ENCODE measurements at regions of chr12 and their contacts with region 1.

Region 1: DNA sequence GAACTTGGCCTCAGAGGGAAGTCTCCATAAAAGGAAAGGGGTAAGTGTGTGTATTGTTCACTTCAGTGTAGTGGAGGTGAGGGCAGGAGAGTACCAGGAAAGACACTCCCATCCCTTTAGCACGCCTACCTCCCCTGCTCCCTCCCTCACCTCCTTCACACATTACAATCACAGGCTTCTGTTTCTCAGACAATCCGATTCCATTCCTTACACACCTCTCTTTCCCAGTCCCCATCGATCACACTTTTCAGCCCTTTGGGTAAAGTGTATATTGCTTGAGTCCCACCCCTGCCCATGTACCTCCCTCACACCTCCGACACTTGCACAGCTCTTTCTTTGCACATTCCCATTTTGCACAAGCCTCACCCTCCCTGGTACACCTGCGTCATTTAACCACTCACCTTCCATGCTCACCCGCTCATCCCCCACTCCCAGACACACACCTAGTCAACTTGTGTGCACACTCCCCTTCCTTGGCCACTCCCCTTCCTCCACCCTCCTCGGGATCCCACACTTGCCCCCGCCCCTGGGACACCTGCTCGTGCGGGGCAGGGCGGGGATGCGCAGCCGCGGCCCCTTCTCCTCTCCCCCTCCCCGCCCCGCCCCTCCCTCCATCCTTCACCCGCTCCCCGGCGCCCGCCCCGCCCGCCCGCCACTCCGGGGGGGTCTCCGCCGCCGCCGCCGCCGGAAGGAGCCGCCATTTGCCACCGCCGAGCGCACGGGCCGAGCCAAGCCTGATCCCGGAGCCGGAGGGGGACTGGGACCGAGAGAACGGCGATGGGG is at the start of gene MARCHF9:
- DNase-seq: peak; percentile 65 to 90 (median 78)
- ATAC-seq: peak; percentile 46 to 57 (median 50)
- H3K4me3 ChIP-seq: peak within 1 kb of the TSS; percentile 55 to 70
- H3K4me3 Mint-ChIP-seq: peak within 1 kb of the TSS; percentile 81 to 91 (median 90)
- H3K27ac ChIP-seq: peak within 1 kb of the TSS; percentile 80
- H3K27ac Mint-ChIP-seq: peak within 1 kb of the TSS; percentile 93 to 99
- H3K4me1 ChIP-seq: peaks cover 34 to 65% of the 10 kb centered on the region in 2 experiments
- H3K4me1 Mint-ChIP-seq: peaks cover 65 to 71% (median 69%) of the 10 kb centered on the region in 3 donors
- H3K27me3 ChIP-seq: no peaks in the 10 kb centered on the region
- H3K27me3 Mint-ChIP-seq: no peaks in the 10 kb centered on the region
- total RNA-seq, gene MARCHF9: 45.4 to 72.9 (median 71.7) TPM

Region 2: GRCh38 chr12:57611108-57611809 is 143.3 kb before region 1 on chr12 and contains the start of gene ARHGEF25:
- CTCF ChIA-PET with region 1: no interaction called
- POLR2A ChIA-PET with region 1: no interaction called
- DNase-seq: peak in 8 of 35 experiments; percentile 20 to 54 (median 40)
- ATAC-seq: peak; percentile 69 to 79 (median 71)
- H3K4me3 ChIP-seq: peak within 1 kb of the TSS; percentile 53 to 62
- H3K4me3 Mint-ChIP-seq: peak within 1 kb of the TSS; percentile 74 to 78 (median 75)
- H3K27ac ChIP-seq: no peak within 1 kb of the TSS
- H3K27ac Mint-ChIP-seq: peak within 1 kb of the TSS in 1 of 2 donors; percentile 74
- H3K4me1 ChIP-seq: peaks cover 2 to 19% of the 10 kb centered on the region in 2 experiments
- H3K4me1 Mint-ChIP-seq: peaks cover 10 to 15% (median 13%) of the 10 kb centered on the region in 3 donors
- H3K27me3 ChIP-seq: peaks cover 2 to 59% of the 10 kb centered on the region in 2 experiments
- H3K27me3 Mint-ChIP-seq: peaks cover 13 to 29% of the 10 kb centered on the region in 2 donors
- total RNA-seq, gene ARHGEF25: 0.67 to 1.4 (median 0.84) TPM

Region 3: GRCh38 chr12:57771708-57772428 is 17.3 kb after region 1 on chr12 and contains the start of gene METTL1:
- CTCF ChIA-PET with region 1: interaction called, 3 to 11 read pairs
- POLR2A ChIA-PET with region 1: interaction called in 1 of 2 experiments, 4 read pairs
- DNase-seq: peak; percentile 74 to 93 (median 85)
- ATAC-seq: peak; percentile 90 to 92 (median 90)
- H3K4me3 ChIP-seq: peak within 1 kb of the TSS; percentile 74 to 91
- H3K4me3 Mint-ChIP-seq: peak within 1 kb of the TSS; percentile 94 to 96 (median 95)
- H3K27ac ChIP-seq: peak within 1 kb of the TSS; percentile 61
- H3K27ac Mint-ChIP-seq: peak within 1 kb of the TSS; percentile 93 to 94
- H3K4me1 ChIP-seq: peaks cover 9 to 26% of the 10 kb centered on the region in 2 experiments
- H3K4me1 Mint-ChIP-seq: peaks cover 12 to 24% (median 21%) of the 10 kb centered on the region in 3 donors
- H3K27me3 ChIP-seq: peaks cover 5% of the 10 kb centered on the region in 2 experiments
- H3K27me3 Mint-ChIP-seq: peaks cover 0 to 5% of the 10 kb centered on the region in 2 donors
- total RNA-seq, gene METTL1: 10.3 to 17.4 (median 14.5) TPM

Region 4: DNA sequence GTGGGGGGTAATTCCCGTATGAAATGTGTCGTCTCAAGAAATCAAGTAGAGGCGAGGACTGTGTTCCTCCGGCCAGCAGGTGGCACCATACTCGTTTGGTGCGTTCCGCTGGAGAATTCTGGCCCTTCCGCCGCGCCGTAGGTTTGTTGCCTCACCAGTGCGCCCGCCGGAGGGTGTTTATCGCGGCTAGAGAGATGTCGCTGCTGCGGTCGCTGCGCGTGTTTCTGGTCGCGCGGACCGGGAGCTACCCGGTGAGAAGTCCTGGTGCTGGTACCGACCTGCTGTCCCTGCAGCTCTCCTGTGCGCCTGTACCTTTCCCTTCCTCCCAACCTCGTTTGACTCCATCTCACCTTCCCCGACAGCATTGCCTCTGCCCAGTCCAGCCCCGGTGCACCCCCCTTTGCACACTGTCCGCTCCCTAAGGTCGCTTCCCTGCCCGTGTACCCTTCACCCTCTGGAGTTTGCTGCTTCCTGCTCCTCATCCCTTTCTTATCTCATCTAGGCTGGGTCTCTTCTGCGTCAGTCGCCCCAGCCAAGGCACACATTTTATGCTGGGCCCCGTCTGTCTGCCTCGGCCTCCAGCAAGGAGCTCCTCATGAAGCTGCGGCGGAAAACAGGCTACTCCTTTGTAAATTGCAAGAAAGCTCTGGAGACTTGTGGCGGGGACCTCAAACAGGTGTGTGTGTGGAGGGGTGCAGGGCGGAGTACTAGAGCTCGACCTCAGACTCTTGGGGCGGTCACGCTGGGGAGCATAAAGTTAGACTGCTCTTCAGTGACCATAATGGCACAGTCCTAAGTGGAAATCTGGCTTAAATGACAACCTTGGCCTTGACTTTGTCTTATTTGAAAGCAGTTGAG is 28.2 kb after region 1 on chr12 and contains the start of gene TSFM:
- CTCF ChIA-PET with region 1: interaction called, 5 to 14 read pairs
- POLR2A ChIA-PET with region 1: interaction called, 3 read pairs
- DNase-seq: peak; percentile 89 to 99 (median 96)
- ATAC-seq: peak; percentile 83 to 96 (median 88)
- H3K4me3 ChIP-seq: peak within 1 kb of the TSS; percentile 89 to 99
- H3K4me3 Mint-ChIP-seq: peak within 1 kb of the TSS; percentile 98 to 100 (median 99)
- H3K27ac ChIP-seq: peak within 1 kb of the TSS; percentile 75
- H3K27ac Mint-ChIP-seq: peak within 1 kb of the TSS; percentile 97 to 99
- H3K4me1 ChIP-seq: peaks cover 22 to 46% of the 10 kb centered on the region in 2 experiments
- H3K4me1 Mint-ChIP-seq: peaks cover 50 to 58% (median 52%) of the 10 kb centered on the region in 3 donors
- H3K27me3 ChIP-seq: no peaks in the 10 kb centered on the region
- H3K27me3 Mint-ChIP-seq: no peaks in the 10 kb centered on the region
- total RNA-seq, gene TSFM: 15.5 to 21.5 (median 20.2) TPM

Region 5: GRCh38 chr12:57904848-57905811 is 150.5 kb after region 1 on chr12:
- CTCF ChIA-PET with region 1: interaction called, 9 to 10 read pairs
- POLR2A ChIA-PET with region 1: no interaction called
- DNase-seq: peak; percentile 53 to 92 (median 78)
- ATAC-seq: peak; percentile 97 to 100 (median 98)
- H3K4me3 ChIP-seq: no peak overlapping the region
- H3K4me3 Mint-ChIP-seq: peak overlapping the region; percentile 0 to 48 (median 29)
- H3K27ac ChIP-seq: no peak overlapping the region
- H3K27ac Mint-ChIP-seq: peak overlapping the region; percentile 2 to 61
- H3K4me1 ChIP-seq: peaks cover 2 to 10% of the 10 kb centered on the region in 2 experiments
- H3K4me1 Mint-ChIP-seq: peaks cover 8 to 11% (median 11%) of the 10 kb centered on the region in 3 donors
- H3K27me3 ChIP-seq: peaks cover 0 to 11% of the 10 kb centered on the region in 2 experiments
- H3K27me3 Mint-ChIP-seq: peaks cover 14 to 17% of the 10 kb centered on the region in 2 donors

Measured in T-cell (primary cell).